Head of caudate nucleus (tissue), 42 donors: ENCODE measurements at regions of chr2 and their contacts with region 1.

Region 1: DNA sequence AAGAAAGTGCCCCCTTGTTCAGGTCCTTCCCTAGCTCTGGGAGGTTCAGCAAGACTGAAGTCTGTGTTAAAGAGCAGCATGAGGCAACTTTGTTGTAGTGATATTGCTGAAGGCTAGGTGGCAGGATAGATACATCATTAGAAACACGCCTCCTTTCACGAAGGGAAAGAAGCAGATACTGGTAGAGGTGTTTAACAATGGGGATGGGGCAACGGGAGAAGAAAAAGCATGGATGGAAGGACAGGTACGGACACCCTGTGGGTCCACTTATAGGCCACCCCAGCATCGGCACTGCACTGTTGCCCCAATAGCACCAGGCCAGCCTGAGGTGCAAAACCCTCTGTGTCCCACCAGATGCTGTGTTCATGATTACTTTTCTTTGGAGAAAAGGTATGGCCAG is 3.5 kb upstream of the IGFBP5 start:
- DNase-seq: peak in 13 of 42 donors; percentile 19 to 74 (median 44)

Region 2: GRCh38 chr2:217106650-217107014 is 407.7 kb after region 1 on chr2:
- intact Hi-C with region 1: no loop called
- DNase-seq: no peak

Region 3: GRCh38 chr2:217166241-217166850 is 467.5 kb after region 1 on chr2:
- intact Hi-C with region 1: loop called (anchors 5 kb)
- DNase-seq: peak in 12 of 42 donors; percentile 8 to 63 (median 24)

Region 4: GRCh38 chr2:217510771-217511291 is 811.9 kb after region 1 on chr2:
- intact Hi-C with region 1: loop called (anchors 5 kb)
- DNase-seq: peak in 40 of 42 donors; percentile 3 to 89 (median 64)

Region 5: DNA sequence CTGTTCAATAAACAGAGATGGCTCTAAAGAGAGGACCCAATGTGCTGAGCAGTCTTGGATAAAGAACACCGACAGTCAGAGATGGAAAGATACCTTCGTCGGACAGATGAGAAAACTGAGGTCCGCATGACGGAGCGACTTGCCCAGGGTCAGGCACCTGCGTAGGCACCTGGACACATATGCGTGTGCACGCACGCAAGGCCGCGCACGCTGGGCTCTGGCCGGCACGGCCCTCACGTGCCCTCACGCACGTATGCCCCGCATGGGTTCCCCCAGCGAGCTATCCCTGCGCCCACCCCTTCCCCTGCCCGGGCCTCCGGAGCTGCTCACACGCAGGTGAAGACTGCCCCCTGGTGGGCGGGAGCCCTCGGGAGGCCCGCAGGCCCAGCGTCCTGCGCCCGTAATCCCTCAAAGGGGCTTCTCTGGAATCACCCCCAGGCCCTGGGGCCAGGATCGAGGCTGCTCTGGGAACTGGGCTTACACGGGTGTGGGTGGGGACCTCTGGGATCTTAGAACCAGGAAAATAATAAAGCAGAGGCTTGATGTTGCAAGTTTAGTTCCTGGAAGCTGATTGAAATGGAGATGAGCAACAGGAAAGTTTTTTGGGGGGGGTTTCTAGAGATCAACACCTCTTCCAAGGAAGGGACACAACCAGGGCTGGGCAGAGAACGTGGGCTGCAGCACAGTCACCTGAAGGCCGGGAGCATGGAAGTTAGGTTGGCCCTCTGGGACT is 1057.6 kb after region 1 on chr2:
- intact Hi-C with region 1: loop called (anchors 10 kb)
- DNase-seq: peak; percentile 64 to 95 (median 87)